SK-N-SH (cell line): ENCODE measurements at regions of chr11 and their contacts with region 1.

Region 1: GRCh38 chr11:36156161-36156816 is 132.9 kb downstream of the COMMD9 start:
- DNase-seq: no peak
- H3K4me3 ChIP-seq: no peak overlapping the region
- H3K27ac ChIP-seq: peak overlapping the region; percentile 46 to 58; a peak in 3 of 4 replicates
- H3K4me1 ChIP-seq: peaks cover 21 to 28% of the 10 kb centered on the region in 2 experiments; a peak in 3 of 4 replicates
- H3K27me3 ChIP-seq: no peaks in the 10 kb centered on the region
- CTCF ChIP-seq: no peak
- EP300 ChIP-seq: peak in 1 of 2 experiments; percentile 63; a peak in 2 of 4 replicates
- RAD21 ChIP-seq: no peak

Region 2: GRCh38 chr11:36142439-36142838 is 13.8 kb before region 1 on chr11:
- CTCF ChIA-PET with region 1: no interaction called
- POLR2A ChIA-PET with region 1: no interaction called
- DNase-seq: no peak
- H3K4me3 ChIP-seq: no peak overlapping the region
- H3K27ac ChIP-seq: no peak overlapping the region
- H3K4me1 ChIP-seq: no peaks in the 10 kb centered on the region
- H3K27me3 ChIP-seq: no peaks in the 10 kb centered on the region
- CTCF ChIP-seq: no peak
- EP300 ChIP-seq: no peak
- RAD21 ChIP-seq: no peak

Region 3: DNA sequence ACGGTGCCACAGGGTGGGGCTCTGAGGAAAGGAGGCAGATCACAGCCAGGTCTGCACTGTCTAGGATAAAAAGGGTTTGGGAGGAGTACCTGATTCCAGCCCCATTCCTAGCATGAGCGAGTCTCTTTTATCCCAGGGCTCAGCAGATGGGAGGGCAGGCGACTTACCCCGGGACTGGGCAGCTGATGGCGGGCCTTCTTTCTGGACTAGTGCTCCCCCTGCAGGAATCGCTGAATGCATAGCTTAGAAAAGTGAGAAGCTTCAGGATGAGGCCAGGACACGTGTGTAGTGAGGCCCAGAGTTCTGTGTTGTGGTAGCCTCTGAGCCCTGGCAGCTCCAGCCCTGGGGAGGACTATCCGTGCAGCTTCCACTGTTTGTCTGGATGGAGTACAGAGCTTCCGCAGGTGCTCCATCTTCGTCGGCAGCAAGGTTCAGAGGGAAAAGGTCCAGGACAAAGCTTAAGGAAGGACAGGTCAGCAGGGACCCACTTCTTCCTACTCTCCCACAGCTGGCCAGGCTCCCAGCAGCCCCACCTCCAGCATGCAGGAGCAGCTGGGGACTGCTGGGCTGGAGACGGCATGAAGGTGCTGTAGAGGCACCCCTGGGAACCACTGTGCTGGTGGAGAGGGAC is 102.6 kb after region 1 on chr11:
- CTCF ChIA-PET with region 1: interaction called, 12 read pairs
- POLR2A ChIA-PET with region 1: no interaction called
- DNase-seq: peak; percentile 66
- H3K4me3 ChIP-seq: no peak overlapping the region
- H3K27ac ChIP-seq: no peak overlapping the region
- H3K4me1 ChIP-seq: peaks cover 0 to 5% of the 10 kb centered on the region in 2 experiments; a peak in 2 of 4 replicates
- H3K27me3 ChIP-seq: no peaks in the 10 kb centered on the region
- CTCF ChIP-seq: peak; percentile 62
- EP300 ChIP-seq: no peak
- RAD21 ChIP-seq: peak; percentile 85